Activated CD4-positive, alpha-beta memory T cell treated with anti-CD3 and anti-CD28 coated beads for 36 hours (primary cell): ENCODE measurements at regions of chr20 and their contacts with region 1.

Region 1: DNA sequence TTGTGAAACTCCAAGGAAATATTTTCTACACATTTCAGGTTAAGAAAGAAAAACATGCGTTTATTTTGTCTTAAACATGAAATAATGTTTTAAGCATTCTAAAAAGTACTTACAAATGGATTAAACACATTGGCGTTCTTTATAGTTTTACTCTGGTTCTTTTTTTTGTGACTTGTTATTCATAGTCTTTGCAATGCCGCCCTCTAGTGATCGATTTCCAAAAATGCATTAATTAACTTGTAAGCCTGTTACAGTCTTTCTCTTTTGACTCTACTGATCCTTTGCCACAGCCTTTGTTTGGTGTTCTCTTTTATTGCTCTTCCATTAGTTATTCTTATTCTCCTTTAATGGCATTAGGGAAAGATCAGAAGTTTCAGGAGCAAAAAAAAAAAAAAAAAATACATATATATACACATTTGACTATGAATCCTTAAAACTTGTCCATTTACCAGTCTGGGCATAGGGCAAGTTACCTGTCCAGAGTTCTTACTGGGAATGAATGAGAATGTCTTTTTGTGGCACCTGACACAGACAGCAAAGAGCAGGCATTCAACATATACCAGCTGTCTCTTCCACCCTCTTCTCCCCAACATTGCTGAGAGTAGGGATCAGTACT is 59.9 kb downstream of the MACROD2 start:
- DNase-seq: no peak
- H3K4me3 Mint-ChIP-seq: no peak overlapping the region
- H3K27ac Mint-ChIP-seq: no peak overlapping the region
- H3K4me1 Mint-ChIP-seq: no peaks in the 10 kb centered on the region
- H3K27me3 Mint-ChIP-seq: no peaks in the 10 kb centered on the region

Region 2: GRCh38 chr20:13819885-13820645 is 235.2 kb before region 1 on chr20:
- CTCF ChIA-PET with region 1: interaction called, 10 read pairs
- POLR2A ChIA-PET with region 1: no interaction called
- intact Hi-C with region 1: loop called (anchors 1 kb)
- DNase-seq: peak; percentile 11
- H3K4me3 Mint-ChIP-seq: no peak overlapping the region
- H3K27ac Mint-ChIP-seq: no peak overlapping the region
- H3K4me1 Mint-ChIP-seq: peaks cover 18% of the 10 kb centered on the region
- H3K27me3 Mint-ChIP-seq: no peaks in the 10 kb centered on the region